Activated naive CD8-positive, alpha-beta T cell treated with anti-CD3 and anti-CD28 coated beads, Interleukin-2, amount 10 ng/mL, durations not matched to agents 7 days and 5 days (primary cell): ENCODE measurements at regions of chr2 and their contacts with region 1.

Region 1: GRCh38 chr2:26080356-26080755 is 46.5 kb downstream of the RAB10 start:
- DNase-seq: no peak
- ATAC-seq: no peak
- H3K4me3 Mint-ChIP-seq: no peak overlapping the region
- H3K27ac Mint-ChIP-seq: no peak overlapping the region
- H3K4me1 Mint-ChIP-seq: peaks cover 9% of the 10 kb centered on the region
- H3K27me3 Mint-ChIP-seq: no peaks in the 10 kb centered on the region

Region 2: DNA sequence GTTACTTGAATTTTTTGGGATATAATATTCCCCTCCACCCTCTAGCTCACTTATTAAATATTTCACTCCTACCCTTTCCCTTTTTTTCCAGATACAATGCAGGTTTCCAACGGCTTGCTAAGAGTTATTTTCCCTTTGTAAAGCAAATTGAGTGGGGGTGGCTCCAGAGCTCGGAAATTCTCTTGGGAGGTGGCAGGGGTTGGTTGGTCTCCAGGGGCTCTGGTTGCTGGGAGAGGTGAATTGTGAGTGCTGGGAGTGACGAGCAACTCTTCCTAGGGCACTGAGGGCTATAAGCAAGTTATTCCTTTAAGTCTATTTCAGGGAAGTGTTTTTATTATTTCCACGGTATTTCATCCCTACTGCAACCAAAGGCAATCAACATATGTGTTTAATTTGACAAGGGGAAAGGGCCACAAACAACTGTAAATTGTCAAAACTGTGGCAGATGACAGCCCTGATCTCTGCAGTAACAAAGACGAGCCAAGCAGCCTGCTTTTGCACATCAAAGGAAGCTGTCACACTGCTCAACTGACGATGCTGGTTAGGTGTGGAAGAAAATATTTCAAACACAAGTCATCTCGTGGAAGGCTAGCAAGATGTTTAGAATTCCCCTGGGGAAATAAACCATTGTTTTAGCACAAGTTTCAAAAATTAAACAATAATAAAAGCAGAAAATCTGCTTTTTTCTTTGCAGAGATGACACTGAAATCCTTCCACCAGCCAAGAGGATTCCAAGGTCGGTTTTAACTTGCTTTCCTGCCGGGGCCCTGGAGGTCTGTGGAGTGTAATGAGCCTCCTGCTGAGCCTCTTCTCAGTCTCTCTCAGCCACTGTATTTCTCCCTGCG is 167.3 kb before region 1 on chr2:
- POLR2A ChIA-PET with region 1: no interaction called
- DNase-seq: no peak
- ATAC-seq: peak; percentile 38
- H3K4me3 Mint-ChIP-seq: no peak overlapping the region
- H3K27ac Mint-ChIP-seq: no peak overlapping the region
- H3K4me1 Mint-ChIP-seq: peaks cover 12% of the 10 kb centered on the region
- H3K27me3 Mint-ChIP-seq: peaks cover 15% of the 10 kb centered on the region

Region 3: GRCh38 chr2:26052740-26053139 is 27.6 kb before region 1 on chr2:
- POLR2A ChIA-PET with region 1: interaction called, 10 read pairs
- DNase-seq: no peak
- ATAC-seq: no peak
- H3K4me3 Mint-ChIP-seq: no peak overlapping the region
- H3K27ac Mint-ChIP-seq: no peak overlapping the region
- H3K4me1 Mint-ChIP-seq: peaks cover 24% of the 10 kb centered on the region
- H3K27me3 Mint-ChIP-seq: no peaks in the 10 kb centered on the region

Region 4: GRCh38 chr2:26099933-26100332 is 19.6 kb after region 1 on chr2:
- POLR2A ChIA-PET with region 1: no interaction called
- DNase-seq: no peak
- ATAC-seq: no peak
- H3K4me3 Mint-ChIP-seq: no peak overlapping the region
- H3K27ac Mint-ChIP-seq: no peak overlapping the region
- H3K4me1 Mint-ChIP-seq: peaks cover 8% of the 10 kb centered on the region
- H3K27me3 Mint-ChIP-seq: no peaks in the 10 kb centered on the region

Region 5: DNA sequence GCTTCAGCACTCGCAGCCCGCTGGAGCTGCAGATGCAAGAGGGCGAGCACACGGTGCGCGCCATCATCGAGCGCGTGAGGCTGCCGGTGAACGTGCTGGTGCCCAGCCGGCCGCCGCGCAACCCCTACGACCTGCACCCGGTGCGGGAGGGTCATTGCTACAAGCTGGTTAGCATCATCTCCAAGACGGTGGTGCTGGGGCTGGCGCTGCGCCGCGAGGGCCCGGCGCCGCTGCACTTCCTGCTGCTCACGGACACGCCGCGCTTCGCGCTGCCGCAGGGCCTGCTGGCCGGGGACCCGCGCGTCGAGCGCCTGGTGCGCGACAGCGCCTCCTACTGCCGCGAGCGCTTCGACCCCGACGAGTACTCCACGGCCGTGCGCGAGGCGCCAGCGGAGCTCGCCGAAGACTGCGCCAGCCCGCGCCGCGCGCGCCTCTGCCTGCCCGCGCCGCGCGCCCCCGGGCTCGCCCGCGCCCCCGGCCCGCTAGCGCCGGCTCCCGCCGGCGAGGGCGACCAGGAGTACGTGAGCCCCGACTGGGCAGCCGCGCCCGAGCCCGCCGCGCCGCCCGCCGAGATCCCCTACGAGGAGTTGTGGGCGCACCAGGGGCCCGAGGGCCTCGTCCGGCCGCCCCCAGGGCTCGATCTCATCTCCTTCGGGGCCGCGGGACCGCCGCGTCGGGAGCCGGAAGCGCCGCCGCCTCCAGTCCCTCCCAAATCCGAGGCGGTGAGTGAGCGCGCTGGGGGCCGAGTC is 104.4 kb after region 1 on chr2:
- POLR2A ChIA-PET with region 1: no interaction called
- DNase-seq: peak; percentile 94
- ATAC-seq: peak; percentile 99
- H3K4me3 Mint-ChIP-seq: peak overlapping the region; percentile 81
- H3K27ac Mint-ChIP-seq: peak overlapping the region; percentile 73
- H3K4me1 Mint-ChIP-seq: peaks cover 16% of the 10 kb centered on the region
- H3K27me3 Mint-ChIP-seq: peaks cover 12% of the 10 kb centered on the region